Adrenal gland (tissue), 19 donors: ENCODE measurements at regions of chr15 and their contacts with region 1.

Region 1: DNA sequence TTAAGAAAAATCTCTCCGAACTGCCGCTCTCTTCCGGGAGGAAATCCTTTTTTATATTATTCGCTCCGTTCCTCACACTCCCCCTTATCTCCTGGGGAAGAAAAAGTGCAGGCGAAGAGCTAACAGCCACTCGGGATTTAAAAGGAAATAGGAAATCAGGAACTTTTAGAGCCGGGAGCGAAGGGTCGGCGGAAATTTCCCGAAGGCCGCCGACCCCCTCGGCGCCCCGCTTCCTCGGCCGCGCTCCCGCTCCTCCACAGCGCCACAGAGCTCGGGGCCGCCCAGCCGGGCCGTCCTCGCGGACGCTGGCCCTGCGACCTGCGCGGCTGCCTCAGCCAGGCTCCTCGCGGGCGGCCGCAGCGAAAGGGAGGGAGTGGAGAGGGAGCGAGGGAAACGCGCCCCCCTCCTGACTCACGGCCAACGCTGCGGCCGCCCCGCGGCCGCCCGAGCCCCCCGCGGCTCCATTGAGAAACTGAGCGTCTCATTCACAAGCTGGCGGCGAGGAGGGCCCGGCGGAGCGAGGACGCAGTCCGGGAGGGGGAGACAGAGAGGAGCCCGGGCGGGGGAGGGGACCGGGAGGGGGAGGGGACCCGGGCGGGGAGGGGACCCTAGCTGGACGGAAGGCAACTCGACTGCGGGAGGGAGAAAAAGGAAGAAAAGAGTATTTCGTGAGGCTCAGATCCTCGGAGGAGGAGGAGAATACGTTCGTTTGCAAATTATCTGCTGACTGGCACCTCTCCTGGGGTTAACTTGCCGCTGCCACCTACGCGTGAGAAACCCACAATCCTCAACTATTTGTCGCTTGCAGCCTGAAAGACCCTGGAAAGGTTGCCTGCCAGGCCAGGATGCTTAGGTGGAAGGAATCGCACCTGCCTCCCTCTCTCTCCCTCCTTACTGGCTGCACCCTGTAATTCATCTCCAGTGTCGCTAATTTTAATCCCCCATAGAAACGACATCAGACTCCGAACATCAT is at the start of gene PTPN9:
- DNase-seq: peak; percentile 70 to 83 (median 76)
- H3K4me3 ChIP-seq: peak within 1 kb of the TSS in 3 of 4 donors; percentile 27 to 96 (median 65)
- H3K27ac ChIP-seq: peak within 1 kb of the TSS in 4 of 5 donors; percentile 72 to 91 (median 85)
- H3K4me1 ChIP-seq: peaks cover 4 to 14% of the 10 kb centered on the region in 2 donors
- H3K27me3 ChIP-seq: no peaks in the 10 kb centered on the region
- CTCF ChIP-seq: peak in 3 of 6 experiments; percentile 14 to 41 (median 16)
- POLR2A ChIP-seq: peak in 1 of 2 donors; percentile 41
- total RNA-seq, gene PTPN9: 11.7 to 28.5 (median 19.3) TPM

Region 2: DNA sequence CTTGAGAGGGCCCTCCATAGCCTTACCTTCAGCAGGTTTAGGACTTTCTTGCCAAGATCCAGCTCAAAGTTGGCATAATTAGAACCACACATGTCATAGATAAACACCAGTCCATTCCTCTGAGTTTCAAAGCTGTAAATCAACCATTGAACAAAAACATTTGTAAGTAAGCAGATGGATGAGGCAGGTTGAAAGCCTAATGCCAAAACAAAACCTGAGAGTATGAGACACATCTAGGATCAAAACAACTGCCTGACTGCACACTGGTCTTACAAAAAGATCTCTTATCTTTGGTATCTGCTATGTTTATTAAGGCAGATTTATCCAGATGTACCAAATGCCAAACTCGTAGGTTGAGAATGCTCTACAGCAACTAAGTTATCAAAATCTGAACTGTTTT is 62.0 kb before region 1 on chr15:
- intact Hi-C with region 1: loop called in 1 of 2 experiments (anchors 5 kb)
- DNase-seq: no peak
- H3K4me3 ChIP-seq: no peak overlapping the region
- H3K27ac ChIP-seq: peak overlapping the region in 1 of 5 donors; percentile 25
- H3K4me1 ChIP-seq: no peaks in the 10 kb centered on the region
- H3K27me3 ChIP-seq: no peaks in the 10 kb centered on the region
- CTCF ChIP-seq: no peak
- POLR2A ChIP-seq: no peak

Region 3: DNA sequence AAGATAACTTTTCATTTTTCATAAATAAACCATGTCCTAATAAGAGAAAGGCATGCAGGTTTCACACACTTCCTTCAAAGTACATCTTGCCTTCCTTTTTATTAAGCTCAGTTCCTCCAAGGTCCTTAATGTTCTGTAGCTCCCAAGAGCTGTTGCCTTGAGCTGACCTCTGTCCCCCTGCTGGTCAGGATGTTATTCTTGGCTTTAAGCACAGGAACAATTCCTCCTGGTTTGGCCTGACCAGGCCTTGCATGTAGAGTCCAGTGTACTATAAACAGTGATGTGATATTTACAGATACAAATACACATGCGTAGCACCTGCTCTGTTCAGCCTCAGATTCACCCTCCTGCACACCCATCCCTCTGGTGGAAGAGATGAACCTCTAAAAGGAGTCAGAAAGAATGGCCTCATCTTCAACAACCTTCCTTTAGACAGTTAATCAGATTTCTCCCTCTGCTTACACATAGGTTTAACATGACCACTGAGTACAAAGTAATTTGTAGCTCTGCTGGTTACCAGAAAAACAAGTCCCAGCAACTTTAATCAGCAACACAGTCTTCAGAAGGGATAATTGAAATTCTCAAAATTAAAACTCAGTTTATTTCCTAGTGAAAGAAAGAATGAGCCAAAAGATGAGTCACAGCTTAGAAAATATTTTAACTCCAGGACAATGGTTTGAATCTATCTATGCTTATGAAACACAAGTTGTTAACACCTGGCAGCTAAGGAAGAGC is 46.7 kb before region 1 on chr15:
- intact Hi-C with region 1: loop called in 1 of 2 experiments (anchors 10 kb)
- DNase-seq: peak; percentile 43 to 87 (median 67)
- H3K4me3 ChIP-seq: no peak overlapping the region
- H3K27ac ChIP-seq: peak overlapping the region; percentile 25 to 73 (median 68)
- H3K4me1 ChIP-seq: peaks cover 24 to 27% of the 10 kb centered on the region in 2 donors
- H3K27me3 ChIP-seq: no peaks in the 10 kb centered on the region
- CTCF ChIP-seq: peak; percentile 10 to 56 (median 45)
- POLR2A ChIP-seq: no peak

Region 4: DNA sequence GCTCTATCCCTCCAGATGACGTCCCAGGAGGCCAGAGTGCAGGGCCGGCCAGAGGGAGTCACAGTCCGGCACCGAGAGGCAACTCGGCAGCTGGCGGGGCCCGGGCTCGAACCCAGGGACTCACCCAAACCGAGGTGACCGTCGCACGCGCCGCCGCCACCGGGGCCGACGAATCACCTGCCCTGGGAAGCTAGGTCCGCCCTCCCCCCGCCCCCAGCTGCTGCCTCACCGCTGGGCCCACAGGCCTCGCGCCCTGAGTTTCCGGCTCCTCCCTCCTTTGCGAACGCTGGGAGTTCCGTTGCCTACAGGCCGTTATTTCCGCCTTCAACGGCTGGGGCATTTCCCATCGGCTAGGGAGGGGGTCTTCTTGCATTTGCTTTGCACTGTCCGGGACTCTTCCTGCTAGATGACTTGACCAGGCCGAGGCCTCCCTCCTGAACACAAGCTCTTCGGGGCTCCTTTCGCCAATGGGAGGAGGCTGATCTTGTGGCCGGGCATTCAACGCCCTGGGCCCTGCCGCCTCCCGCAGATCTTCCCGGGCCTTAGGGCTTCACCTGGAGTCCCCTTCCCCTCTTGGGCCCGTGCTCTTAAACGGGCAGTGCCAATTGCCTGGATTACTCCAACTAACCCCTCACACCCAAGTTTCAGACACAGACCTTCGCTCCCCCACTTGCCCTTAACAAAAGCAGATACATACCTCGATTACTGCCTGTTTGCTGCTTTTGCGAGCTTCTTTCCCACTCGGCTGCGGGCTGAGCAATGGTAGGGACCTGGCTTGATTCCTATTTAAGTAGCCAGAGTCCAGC is 46.5 kb after region 1 on chr15 and contains the start of gene SNUPN:
- intact Hi-C with region 1: loop called in 1 of 2 experiments (anchors 10 kb)
- DNase-seq: peak; percentile 93 to 97 (median 95)
- H3K4me3 ChIP-seq: peak within 1 kb of the TSS; percentile 58 to 94 (median 86)
- H3K27ac ChIP-seq: peak within 1 kb of the TSS; percentile 81 to 95 (median 91)
- H3K4me1 ChIP-seq: peaks cover 4 to 17% of the 10 kb centered on the region in 2 donors
- H3K27me3 ChIP-seq: no peaks in the 10 kb centered on the region
- CTCF ChIP-seq: no peak
- POLR2A ChIP-seq: peak; percentile 11 to 67
- total RNA-seq, gene SNUPN: 18.5 to 40.8 (median 25.5) TPM

Region 5: DNA sequence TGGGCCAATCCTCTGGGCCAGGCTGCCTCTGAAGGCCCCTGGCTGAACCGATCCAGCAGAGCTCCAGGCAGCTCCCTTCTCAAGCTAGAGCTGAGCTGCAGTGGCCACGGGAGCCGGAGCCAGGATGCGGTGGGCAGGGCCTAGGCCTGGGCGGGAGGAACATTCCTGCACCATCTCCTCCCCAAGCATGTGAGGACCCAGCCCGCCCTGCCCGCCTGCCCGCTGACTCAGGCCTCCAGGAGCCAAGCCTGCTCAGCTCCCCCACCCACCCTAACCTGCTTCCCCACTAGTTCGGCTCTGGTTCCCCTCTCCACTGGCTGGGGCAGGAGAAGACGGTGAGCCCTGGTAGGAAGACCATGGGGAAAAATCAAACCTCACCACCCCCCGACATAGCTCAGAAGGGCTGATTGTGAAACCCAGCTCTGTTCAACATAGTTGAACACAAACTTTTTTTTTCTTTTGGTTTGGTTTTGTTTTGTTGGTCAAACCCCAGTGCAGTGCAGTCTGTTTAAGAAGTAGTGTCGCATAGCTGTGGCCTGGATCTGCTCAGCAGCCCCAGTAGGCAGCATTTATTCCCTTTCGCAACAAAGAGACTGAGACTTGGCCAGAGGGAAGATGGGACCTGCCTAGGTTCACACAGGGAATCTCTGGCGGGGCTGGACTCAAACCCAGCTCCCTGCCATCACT is 82.0 kb after region 1 on chr15:
- intact Hi-C with region 1: no loop called
- DNase-seq: peak; percentile 61 to 85 (median 78)
- H3K4me3 ChIP-seq: no peak overlapping the region
- H3K27ac ChIP-seq: peak overlapping the region in 4 of 5 donors; percentile 40 to 85 (median 72)
- H3K4me1 ChIP-seq: peaks cover 0 to 13% of the 10 kb centered on the region in 2 donors
- H3K27me3 ChIP-seq: no peaks in the 10 kb centered on the region
- CTCF ChIP-seq: no peak
- POLR2A ChIP-seq: no peak